ENCODE measurements at regions of chr20 and their contacts with region 1.

Region 1: DNA sequence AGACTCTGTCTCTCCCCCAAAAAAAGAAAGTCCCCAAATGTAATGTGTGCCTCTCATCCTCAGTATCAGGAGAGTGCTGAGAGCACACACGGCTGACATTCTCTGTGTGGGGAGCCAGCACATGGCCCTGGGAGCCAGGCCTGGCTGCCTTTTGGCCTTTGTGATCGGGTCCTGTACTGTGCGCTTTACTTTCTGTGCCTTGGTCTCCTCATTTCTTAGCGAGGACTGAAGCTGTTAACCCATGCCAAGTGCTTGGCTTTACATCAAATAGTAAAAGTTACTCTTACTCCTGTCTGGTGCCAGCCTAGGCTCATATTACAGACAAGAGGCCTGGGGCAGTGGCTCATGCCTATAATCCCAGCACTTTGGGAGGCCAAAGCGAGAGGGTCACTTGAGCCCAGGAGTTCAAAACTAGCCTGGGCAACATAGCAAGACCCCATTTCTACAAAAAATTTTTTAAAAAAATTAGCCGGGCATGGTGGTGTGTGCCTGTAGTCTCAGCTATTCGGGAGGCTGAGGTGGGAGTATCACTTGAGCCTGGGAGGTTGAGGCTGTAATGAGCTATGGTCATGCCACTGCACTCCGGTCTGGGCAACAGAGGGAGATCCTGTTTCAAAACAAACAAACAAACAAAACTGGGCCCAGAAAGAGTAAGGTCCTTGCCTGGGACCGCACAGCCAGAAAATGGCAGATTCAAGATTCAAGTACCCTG is 50.3 kb downstream of the SNAI1 start:
- DNase-seq: no peak
- H3K4me3 ChIP-seq: no peak overlapping the region
- H3K27ac ChIP-seq: no peak overlapping the region
- H3K4me1 ChIP-seq: peaks cover 0 to 3% (median 1%) of the 10 kb centered on the region in 4 experiments; a peak in 3 of 7 replicates
- H3K27me3 ChIP-seq: no peaks in the 10 kb centered on the region
- CTCF ChIP-seq: no peak
- EP300 ChIP-seq: no peak
- POLR2A ChIP-seq: no peak
- RAD21 ChIP-seq: no peak

Region 2: GRCh38 chr20:49372095-49372726 is 660.9 kb before region 1 on chr20:
- CTCF ChIA-PET with region 1: interaction called, 11 read pairs
- POLR2A ChIA-PET with region 1: no interaction called
- DNase-seq: no peak
- H3K4me3 ChIP-seq: no peak overlapping the region
- H3K27ac ChIP-seq: no peak overlapping the region
- H3K4me1 ChIP-seq: no peaks in the 10 kb centered on the region; a peak in 1 of 7 replicates
- H3K27me3 ChIP-seq: no peaks in the 10 kb centered on the region
- CTCF ChIP-seq: no peak
- EP300 ChIP-seq: no peak
- POLR2A ChIP-seq: no peak
- RAD21 ChIP-seq: no peak